ENCODE measurements at regions of chr6 and their contacts with region 1.

Region 1: DNA sequence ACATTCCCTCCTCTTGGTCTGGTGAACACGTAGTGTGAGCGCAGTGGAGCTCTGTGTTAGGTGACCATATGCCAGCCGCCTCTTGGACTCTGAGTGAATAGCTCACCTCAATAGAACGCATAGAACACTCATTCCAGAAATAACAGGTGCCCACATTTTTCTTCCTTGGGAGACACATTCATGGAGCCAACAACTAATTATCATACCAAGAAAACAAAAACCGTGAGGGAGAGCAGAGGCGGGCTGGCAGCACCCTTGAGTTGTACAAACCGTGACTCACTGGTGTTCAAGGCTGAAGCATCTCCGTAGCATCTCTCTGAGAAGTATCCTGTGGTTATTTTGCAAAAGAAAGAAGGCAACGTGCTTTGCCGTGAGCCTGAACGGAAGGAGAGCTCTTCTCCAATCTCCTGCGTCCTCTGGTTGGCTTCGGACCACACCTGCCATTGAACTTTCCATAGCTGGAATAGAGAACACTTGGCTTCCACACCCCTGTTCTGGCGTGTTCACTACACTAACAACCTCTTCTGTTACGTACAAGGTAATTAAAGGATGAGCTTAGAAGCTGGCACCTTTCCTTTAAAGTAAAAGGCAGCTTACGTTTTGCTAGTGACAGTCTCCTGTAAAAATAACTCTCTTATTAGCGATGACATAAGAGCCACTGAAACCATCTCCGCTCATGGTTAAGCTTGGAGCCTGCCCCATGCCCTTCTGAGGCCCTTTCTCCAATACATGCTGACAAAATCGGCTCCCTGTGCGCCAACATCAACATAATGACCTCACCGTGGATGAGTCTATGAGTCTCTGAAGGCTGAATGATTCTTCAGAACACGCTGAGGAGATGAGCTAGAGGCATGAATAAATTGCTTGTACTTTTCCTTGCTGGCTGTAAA is 30.2 kb upstream of the SGK1 start:
- DNase-seq: peak; percentile 89
- H3K4me3 Mint-ChIP-seq: peak overlapping the region; percentile 60
- H3K27ac Mint-ChIP-seq: peak overlapping the region; percentile 71
- H3K4me1 Mint-ChIP-seq: peaks cover 13% of the 10 kb centered on the region
- H3K27me3 Mint-ChIP-seq: no peaks in the 10 kb centered on the region
- CTCF ChIP-seq: no peak

Region 2: GRCh38 chr6:134422426-134423231 is 74.5 kb after region 1 on chr6:
- CTCF ChIA-PET with region 1: no interaction called
- POLR2A ChIA-PET with region 1: no interaction called
- intact Hi-C with region 1: loop called (anchors 1 kb)
- DNase-seq: peak; percentile 88
- H3K4me3 Mint-ChIP-seq: peak overlapping the region; percentile 23
- H3K27ac Mint-ChIP-seq: peak overlapping the region; percentile 92
- H3K4me1 Mint-ChIP-seq: peaks cover 46% of the 10 kb centered on the region
- H3K27me3 Mint-ChIP-seq: no peaks in the 10 kb centered on the region
- CTCF ChIP-seq: no peak

Region 3: GRCh38 chr6:134436281-134436815 is 88.2 kb after region 1 on chr6:
- CTCF ChIA-PET with region 1: no interaction called
- POLR2A ChIA-PET with region 1: interaction called, 4 read pairs
- intact Hi-C with region 1: loop called (anchors 5 kb)
- DNase-seq: peak; percentile 94
- H3K4me3 Mint-ChIP-seq: peak overlapping the region; percentile 43
- H3K27ac Mint-ChIP-seq: peak overlapping the region; percentile 88
- H3K4me1 Mint-ChIP-seq: peaks cover 24% of the 10 kb centered on the region
- H3K27me3 Mint-ChIP-seq: no peaks in the 10 kb centered on the region
- CTCF ChIP-seq: no peak